Activated B cell treated with CpG ODN at 0.5 μM for 24 hours (primary cell): ENCODE measurements at regions of chr3 and their contacts with region 1.

Region 1: GRCh38 chr3:15601397-15602145 is at the starts of genes BTD and HACL1:
- DNase-seq: peak; percentile 97
- ATAC-seq: peak; percentile 89
- H3K4me3 Mint-ChIP-seq: peak within 1 kb of the TSS; percentile 94
- H3K27ac Mint-ChIP-seq: peak within 1 kb of the TSS; percentile 98
- H3K4me1 Mint-ChIP-seq: peaks cover 38% of the 10 kb centered on the region
- H3K27me3 Mint-ChIP-seq: no peaks in the 10 kb centered on the region
- CTCF ChIP-seq: no peak
- total RNA-seq, gene BTD: 7.6 and 9.1 TPM in 2 replicates
- total RNA-seq, gene HACL1: 24.7 and 28.4 TPM in 2 replicates

Region 2: GRCh38 chr3:15064835-15065549 is 536.6 kb before region 1 on chr3 and contains the start of gene MRPS25:
- CTCF ChIA-PET with region 1: no interaction called
- POLR2A ChIA-PET with region 1: no interaction called
- intact Hi-C with region 1: loop called (anchors 1 kb)
- DNase-seq: peak; percentile 84
- ATAC-seq: peak; percentile 97
- H3K4me3 Mint-ChIP-seq: peak within 1 kb of the TSS; percentile 98
- H3K27ac Mint-ChIP-seq: peak within 1 kb of the TSS; percentile 95
- H3K4me1 Mint-ChIP-seq: peaks cover 25% of the 10 kb centered on the region
- H3K27me3 Mint-ChIP-seq: no peaks in the 10 kb centered on the region
- CTCF ChIP-seq: no peak
- total RNA-seq, gene MRPS25: 72.4 and 85.9 TPM in 2 replicates

Region 3: GRCh38 chr3:15180042-15180611 is 421.4 kb before region 1 on chr3:
- CTCF ChIA-PET with region 1: no interaction called
- POLR2A ChIA-PET with region 1: no interaction called
- intact Hi-C with region 1: no loop called
- DNase-seq: no peak
- ATAC-seq: peak; percentile 81
- H3K4me3 Mint-ChIP-seq: peak overlapping the region; percentile 60
- H3K27ac Mint-ChIP-seq: peak overlapping the region; percentile 74
- H3K4me1 Mint-ChIP-seq: peaks cover 21% of the 10 kb centered on the region
- H3K27me3 Mint-ChIP-seq: peaks cover 2% of the 10 kb centered on the region
- CTCF ChIP-seq: no peak

Region 4: DNA sequence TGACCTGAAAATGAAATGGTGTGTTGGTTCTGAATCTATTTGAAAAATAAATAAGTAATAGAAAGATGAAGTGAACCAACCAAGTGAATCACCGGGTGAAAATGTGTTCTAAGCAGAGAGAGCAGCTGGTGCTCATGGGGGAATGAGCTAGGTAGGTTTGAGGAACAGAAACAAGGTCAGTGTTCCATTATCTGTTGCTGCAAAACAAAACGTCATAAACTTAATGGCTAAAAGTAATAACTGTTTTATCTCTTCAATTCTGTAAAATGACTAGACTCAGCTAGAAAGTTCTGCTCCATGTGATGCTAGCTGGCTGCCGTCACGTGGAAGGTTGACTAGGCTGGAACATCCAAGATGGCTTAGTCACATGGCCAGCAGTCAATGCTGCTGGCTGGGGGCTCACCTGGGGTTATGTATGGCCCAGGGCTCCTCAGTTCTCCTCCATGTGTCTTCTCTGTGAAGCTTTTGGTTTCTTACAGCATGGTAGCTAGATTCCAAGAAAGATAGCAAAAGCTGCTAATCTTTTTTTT is 255.9 kb before region 1 on chr3:
- CTCF ChIA-PET with region 1: no interaction called
- POLR2A ChIA-PET with region 1: no interaction called
- intact Hi-C with region 1: loop called (anchors 1 kb)
- DNase-seq: peak; percentile 53
- ATAC-seq: peak; percentile 90
- H3K4me3 Mint-ChIP-seq: peak overlapping the region; percentile 59
- H3K27ac Mint-ChIP-seq: peak overlapping the region; percentile 98
- H3K4me1 Mint-ChIP-seq: peaks cover 84% of the 10 kb centered on the region
- H3K27me3 Mint-ChIP-seq: no peaks in the 10 kb centered on the region
- CTCF ChIP-seq: no peak

Region 5: GRCh38 chr3:15557511-15557946 is 44.0 kb before region 1 on chr3:
- CTCF ChIA-PET with region 1: no interaction called
- POLR2A ChIA-PET with region 1: interaction called, 4 read pairs
- intact Hi-C with region 1: loop called (anchors 1 kb)
- DNase-seq: peak; percentile 19
- ATAC-seq: peak; percentile 81
- H3K4me3 Mint-ChIP-seq: no peak overlapping the region
- H3K27ac Mint-ChIP-seq: no peak overlapping the region
- H3K4me1 Mint-ChIP-seq: peaks cover 29% of the 10 kb centered on the region
- H3K27me3 Mint-ChIP-seq: no peaks in the 10 kb centered on the region
- CTCF ChIP-seq: no peak

Region 6: GRCh38 chr3:15859507-15860013 is 258.0 kb after region 1 on chr3:
- CTCF ChIA-PET with region 1: no interaction called
- POLR2A ChIA-PET with region 1: interaction called, 6 read pairs
- intact Hi-C with region 1: loop called (anchors 1 kb)
- DNase-seq: peak; percentile 77
- ATAC-seq: peak; percentile 77
- H3K4me3 Mint-ChIP-seq: peak overlapping the region; percentile 99
- H3K27ac Mint-ChIP-seq: peak overlapping the region; percentile 95
- H3K4me1 Mint-ChIP-seq: peaks cover 27% of the 10 kb centered on the region
- H3K27me3 Mint-ChIP-seq: no peaks in the 10 kb centered on the region
- CTCF ChIP-seq: no peak